MCF 10A (cell line): ENCODE measurements at regions of chr9 and their contacts with region 1.

Region 1: DNA sequence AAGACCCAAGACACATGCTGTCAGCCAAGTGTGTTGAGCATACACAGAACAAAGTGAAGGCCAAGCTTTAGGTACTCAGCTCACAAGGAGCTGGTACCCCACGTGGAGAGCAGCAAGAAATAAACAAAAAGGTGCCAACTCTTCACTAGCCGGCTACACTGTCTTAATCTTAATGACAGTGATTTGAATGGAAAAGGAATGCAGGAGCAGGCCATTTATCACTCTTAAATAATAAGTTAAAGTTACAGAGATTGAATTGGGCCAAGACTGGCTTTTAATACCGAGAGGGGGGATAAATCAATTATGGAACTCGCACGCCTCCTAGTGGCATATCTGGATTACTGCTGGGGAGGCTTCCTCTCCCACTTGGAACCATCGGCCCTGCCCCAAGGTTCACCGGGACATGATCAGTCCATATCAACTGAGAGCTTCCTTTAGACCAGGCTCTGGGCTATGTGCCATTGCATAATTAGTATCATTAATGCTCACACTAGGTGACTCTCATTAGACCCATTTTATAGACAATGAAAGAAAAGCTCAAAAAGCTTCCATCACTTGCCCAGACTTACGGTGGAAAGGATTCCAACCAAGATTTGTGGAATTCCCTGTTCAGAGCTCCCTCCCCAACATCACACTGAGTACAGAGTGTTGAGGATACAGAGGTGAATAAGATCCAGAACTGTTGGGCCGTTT is 94.0 kb downstream of the ACTL7B start:
- DNase-seq: peak; percentile 71
- H3K4me3 Mint-ChIP-seq: no peak overlapping the region
- H3K27ac Mint-ChIP-seq: peak overlapping the region; percentile 31
- H3K4me1 Mint-ChIP-seq: peaks cover 18% of the 10 kb centered on the region
- H3K27me3 Mint-ChIP-seq: no peaks in the 10 kb centered on the region
- CTCF ChIP-seq: peak; percentile 89

Region 2: GRCh38 chr9:107421947-107422793 is 1339.6 kb before region 1 on chr9:
- CTCF ChIA-PET with region 1: interaction called, 6 read pairs
- POLR2A ChIA-PET with region 1: no interaction called
- intact Hi-C with region 1: loop called (anchors 1 kb)
- DNase-seq: peak; percentile 87
- H3K4me3 Mint-ChIP-seq: no peak overlapping the region
- H3K27ac Mint-ChIP-seq: no peak overlapping the region
- H3K4me1 Mint-ChIP-seq: peaks cover 11% of the 10 kb centered on the region
- H3K27me3 Mint-ChIP-seq: no peaks in the 10 kb centered on the region
- CTCF ChIP-seq: peak; percentile 56

Region 3: DNA sequence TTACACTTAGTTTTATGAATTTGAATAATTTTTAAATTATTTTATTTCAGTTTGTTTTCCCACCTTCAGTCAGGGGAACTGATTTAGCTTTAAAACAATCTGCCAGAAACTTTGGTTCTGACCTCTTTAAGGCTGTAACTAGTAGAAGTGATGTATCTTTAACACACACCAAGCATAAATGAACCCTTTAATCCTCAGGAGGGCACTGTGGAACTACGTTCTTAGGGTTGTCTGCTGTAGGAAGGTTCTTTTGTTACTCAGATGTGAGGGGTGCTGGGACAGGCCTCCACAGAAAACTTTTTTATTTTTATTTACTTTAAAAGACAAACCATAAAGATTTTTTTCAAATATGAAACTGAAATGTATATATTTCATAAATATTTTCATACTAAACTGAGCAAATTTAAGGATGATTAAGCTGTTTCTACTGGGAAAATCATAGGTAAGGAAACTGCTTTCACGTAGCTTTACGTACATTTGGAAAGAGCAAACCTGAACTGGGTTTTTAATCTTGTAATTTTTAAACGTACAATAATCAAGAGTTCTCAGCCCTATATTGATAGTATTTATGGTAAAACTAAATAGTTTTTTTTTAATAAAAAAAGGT is 1277.6 kb before region 1 on chr9:
- CTCF ChIA-PET with region 1: interaction called, 13 read pairs
- POLR2A ChIA-PET with region 1: interaction called, 4 read pairs
- intact Hi-C with region 1: loop called (anchors 5 kb)
- DNase-seq: peak; percentile 81
- H3K4me3 Mint-ChIP-seq: no peak overlapping the region
- H3K27ac Mint-ChIP-seq: no peak overlapping the region
- H3K4me1 Mint-ChIP-seq: peaks cover 31% of the 10 kb centered on the region
- H3K27me3 Mint-ChIP-seq: no peaks in the 10 kb centered on the region
- CTCF ChIP-seq: peak; percentile 55

Region 4: DNA sequence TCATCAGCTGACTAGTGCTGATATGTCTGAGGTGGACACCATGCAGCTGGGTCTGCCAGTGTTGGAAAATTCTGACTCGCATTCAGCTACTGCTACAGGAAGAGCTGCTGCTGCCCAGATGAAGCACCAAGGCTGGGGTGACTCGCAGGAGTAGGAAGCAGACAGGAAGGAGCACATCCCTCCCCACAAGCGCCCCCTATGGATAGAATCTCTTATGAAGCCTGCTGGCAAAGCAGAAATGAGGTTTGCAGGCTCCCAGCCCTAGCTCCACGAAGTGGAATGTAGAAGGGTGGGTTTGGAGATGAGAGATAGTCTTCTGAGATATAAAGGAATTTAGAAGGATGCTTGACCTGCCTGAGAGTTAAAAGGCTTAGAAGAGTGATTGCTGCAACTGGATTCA is 349.0 kb before region 1 on chr9:
- CTCF ChIA-PET with region 1: interaction called, 14 read pairs
- POLR2A ChIA-PET with region 1: no interaction called
- intact Hi-C with region 1: loop called (anchors 1 kb)
- DNase-seq: peak; percentile 19
- H3K4me3 Mint-ChIP-seq: no peak overlapping the region
- H3K27ac Mint-ChIP-seq: no peak overlapping the region
- H3K4me1 Mint-ChIP-seq: peaks cover 11% of the 10 kb centered on the region
- H3K27me3 Mint-ChIP-seq: no peaks in the 10 kb centered on the region
- CTCF ChIP-seq: no peak

Region 5: DNA sequence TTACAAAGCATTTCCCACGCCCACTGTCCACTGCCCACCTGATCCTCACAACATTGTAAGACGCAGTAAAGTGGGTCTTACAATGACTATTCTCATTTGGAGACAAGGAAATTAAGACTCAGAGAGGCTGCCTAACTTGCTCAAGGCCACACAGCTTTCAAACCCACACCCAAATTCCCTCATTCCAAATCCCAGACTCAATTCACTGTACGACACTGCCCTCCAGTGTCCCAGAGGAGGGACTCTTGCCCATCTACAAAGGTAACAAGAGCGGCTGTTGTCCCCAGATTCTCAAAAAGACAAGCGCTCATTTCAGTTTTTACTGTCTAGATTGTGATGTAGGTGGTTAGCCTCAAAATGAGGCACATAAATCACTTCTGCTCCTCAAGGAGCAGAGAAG is 90.6 kb before region 1 on chr9:
- CTCF ChIA-PET with region 1: no interaction called
- POLR2A ChIA-PET with region 1: no interaction called
- intact Hi-C with region 1: loop called (anchors 5 kb)
- DNase-seq: peak; percentile 64
- H3K4me3 Mint-ChIP-seq: no peak overlapping the region
- H3K27ac Mint-ChIP-seq: peak overlapping the region; percentile 44
- H3K4me1 Mint-ChIP-seq: peaks cover 58% of the 10 kb centered on the region
- H3K27me3 Mint-ChIP-seq: no peaks in the 10 kb centered on the region
- CTCF ChIP-seq: peak; percentile 86

Region 6: DNA sequence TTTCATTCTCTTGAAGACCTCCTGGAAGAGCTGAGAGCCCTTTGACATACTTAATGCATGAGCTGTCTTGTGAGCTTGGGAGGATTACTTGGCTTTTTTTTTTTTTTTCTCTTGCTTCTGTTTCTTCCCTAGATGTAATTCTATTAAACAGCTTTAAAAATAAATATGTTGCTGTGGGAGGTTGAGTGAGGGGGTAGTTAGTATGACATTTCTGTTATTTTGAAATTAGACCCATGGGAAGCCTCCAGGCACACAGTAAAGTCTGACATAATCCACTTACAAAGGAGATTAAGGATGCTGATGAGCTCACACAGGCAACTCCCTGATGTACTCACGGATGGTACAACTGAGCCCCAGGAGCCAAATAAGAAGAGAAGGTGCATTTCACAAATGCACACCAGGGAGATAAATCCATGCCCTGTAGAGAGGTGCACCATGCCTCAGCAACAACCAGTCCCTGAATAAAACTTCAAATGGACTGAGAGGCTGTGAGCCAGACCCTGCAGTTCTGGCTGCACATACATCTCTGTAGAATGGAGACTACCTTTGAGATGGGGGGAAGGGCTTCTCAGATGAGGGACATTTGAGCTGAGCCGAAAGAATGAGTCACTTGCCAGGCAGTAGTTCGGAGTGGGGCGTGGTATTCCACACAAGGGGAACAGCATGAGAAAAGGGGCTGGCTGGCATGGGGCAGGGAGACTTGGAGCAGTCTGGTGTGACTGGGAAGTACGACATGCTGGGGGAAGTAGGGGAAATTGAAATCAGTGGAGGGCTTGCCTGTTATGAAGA is 25.3 kb after region 1 on chr9:
- CTCF ChIA-PET with region 1: interaction called, 20 read pairs
- POLR2A ChIA-PET with region 1: interaction called, 3 read pairs
- intact Hi-C with region 1: no loop called
- DNase-seq: peak; percentile 93
- H3K4me3 Mint-ChIP-seq: peak overlapping the region; percentile 59
- H3K27ac Mint-ChIP-seq: peak overlapping the region; percentile 73
- H3K4me1 Mint-ChIP-seq: peaks cover 31% of the 10 kb centered on the region
- H3K27me3 Mint-ChIP-seq: no peaks in the 10 kb centered on the region
- CTCF ChIP-seq: no peak

Region 7: GRCh38 chr9:108874058-108874788 is 112.4 kb after region 1 on chr9:
- CTCF ChIA-PET with region 1: no interaction called
- POLR2A ChIA-PET with region 1: no interaction called
- intact Hi-C with region 1: no loop called
- DNase-seq: no peak
- H3K4me3 Mint-ChIP-seq: no peak overlapping the region
- H3K27ac Mint-ChIP-seq: peak overlapping the region; percentile 31
- H3K4me1 Mint-ChIP-seq: peaks cover 4% of the 10 kb centered on the region
- H3K27me3 Mint-ChIP-seq: no peaks in the 10 kb centered on the region
- CTCF ChIP-seq: no peak